Ascending aorta (tissue), 2 donors: ENCODE measurements at regions of chr14 and their contacts with region 1.

Region 1: DNA sequence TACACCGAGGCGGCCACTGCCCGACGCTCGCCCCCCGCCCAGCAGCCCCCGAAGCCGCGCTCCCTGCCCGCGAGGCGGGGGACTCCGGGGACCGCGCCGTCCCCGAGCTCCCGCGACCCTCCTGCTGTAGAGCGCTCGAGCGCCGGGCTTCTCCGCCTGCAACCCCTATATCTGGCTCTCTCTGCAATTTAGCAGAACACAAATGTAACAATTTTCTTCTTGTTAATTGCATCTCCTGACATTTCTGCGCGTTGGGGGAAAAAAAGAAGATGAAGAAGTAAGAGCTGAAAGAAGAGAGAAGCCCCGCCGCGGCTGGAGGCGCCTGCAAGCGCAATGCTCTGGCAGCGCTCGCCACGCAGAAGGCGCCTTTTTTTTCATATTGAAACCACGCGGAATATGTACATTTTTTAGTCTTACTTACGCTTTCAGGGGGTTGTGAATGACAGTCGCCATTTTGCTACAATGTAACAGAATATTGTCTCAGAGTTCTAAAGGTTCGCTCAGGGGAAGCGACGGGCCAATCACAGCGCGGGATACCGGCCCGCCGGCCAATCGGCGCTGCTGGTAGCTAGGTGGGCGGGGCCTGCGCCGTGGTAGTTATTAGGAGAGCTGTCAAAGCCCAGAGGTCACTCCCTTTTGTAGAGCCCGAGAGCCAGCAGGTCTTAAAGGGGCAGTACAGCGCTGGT is at the start of gene DPF3:
- DNase-seq: peak; percentile 92 to 97
- H3K4me3 ChIP-seq: peak within 1 kb of the TSS; percentile 78 to 92
- H3K27ac ChIP-seq: peak within 1 kb of the TSS in 1 of 2 donors; percentile 37
- H3K4me1 ChIP-seq: peaks cover 6% of the 10 kb centered on the region in 2 donors
- H3K27me3 ChIP-seq: peaks cover 3% of the 10 kb centered on the region
- CTCF ChIP-seq: no peak
- total RNA-seq, gene DPF3: 0.11 TPM

Region 2: GRCh38 chr14:72745991-72746980 is 147.5 kb before region 1 on chr14:
- intact Hi-C with region 1: loop called (anchors 5 kb)
- DNase-seq: no peak
- H3K4me3 ChIP-seq: no peak overlapping the region
- H3K27ac ChIP-seq: peak overlapping the region; percentile 65 to 72
- H3K4me1 ChIP-seq: peaks cover 0 to 8% of the 10 kb centered on the region in 2 donors
- H3K27me3 ChIP-seq: no peaks in the 10 kb centered on the region
- CTCF ChIP-seq: peak in 2 of 3 experiments; percentile 20 to 23

Region 3: GRCh38 chr14:72926292-72927028 is 32.7 kb after region 1 on chr14 and contains the start of gene DCAF4:
- intact Hi-C with region 1: loop called (anchors 2 kb)
- DNase-seq: peak; percentile 92 to 98
- H3K4me3 ChIP-seq: peak within 1 kb of the TSS; percentile 60 to 91
- H3K27ac ChIP-seq: peak within 1 kb of the TSS; percentile 67 to 77
- H3K4me1 ChIP-seq: peaks cover 5% of the 10 kb centered on the region in 2 donors
- H3K27me3 ChIP-seq: no peaks in the 10 kb centered on the region
- CTCF ChIP-seq: no peak
- total RNA-seq, gene DCAF4: 0.64 TPM